Sigmoid colon (tissue), 7 donors: ENCODE measurements at regions of chr9 and their contacts with region 1.

Region 1: DNA sequence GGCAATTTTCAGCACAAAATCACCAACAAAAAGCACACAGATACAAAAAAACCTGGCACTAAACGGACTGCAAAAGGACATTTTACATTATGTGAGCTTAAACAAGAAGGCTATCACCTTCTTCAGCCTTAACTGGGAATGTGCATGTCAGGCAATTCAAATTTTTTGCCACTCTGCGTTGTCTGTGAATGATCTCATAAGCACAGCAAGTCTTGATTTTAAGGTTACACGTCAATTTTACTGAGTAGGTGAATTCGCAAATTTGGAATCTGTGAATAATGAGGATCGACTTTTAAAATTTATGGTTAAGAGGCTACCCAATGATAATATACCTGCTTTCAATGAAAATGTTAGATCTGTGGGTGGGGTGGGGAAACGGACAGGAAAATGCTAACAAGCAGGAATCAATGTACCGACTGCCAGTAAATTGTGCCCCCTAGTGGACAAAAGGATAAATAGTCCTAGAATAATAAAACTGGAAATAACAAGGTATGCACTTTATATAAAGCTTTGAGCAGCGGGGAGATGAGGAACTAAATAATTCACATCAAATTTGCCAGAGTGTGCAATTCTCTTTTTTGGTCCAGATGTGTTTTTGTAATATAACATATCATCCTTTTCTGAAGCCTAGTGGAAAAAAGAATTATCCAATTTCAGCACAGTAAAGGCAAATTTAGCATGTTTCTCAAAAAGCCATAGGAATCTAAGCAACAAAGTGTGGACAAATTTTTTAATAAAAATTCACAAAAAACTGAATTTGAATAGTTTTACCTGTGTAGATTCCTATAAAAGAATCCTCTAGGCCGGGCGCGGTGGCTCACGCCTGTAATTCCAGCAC is 20.5 kb downstream of the EQTN start:
- DNase-seq: no peak
- H3K4me3 ChIP-seq: peak overlapping the region in 2 of 4 donors; percentile 13 to 22
- H3K27ac ChIP-seq: no peak overlapping the region
- H3K4me1 ChIP-seq: peaks cover 0 to 11% (median 8%) of the 10 kb centered on the region in 4 donors
- H3K27me3 ChIP-seq: no peaks in the 10 kb centered on the region
- CTCF ChIP-seq: peak; percentile 52 to 80 (median 71)
- EP300 ChIP-seq: no peak
- POLR2A ChIP-seq: no peak

Region 2: GRCh38 chr9:27033823-27034403 is 242.5 kb before region 1 on chr9:
- intact Hi-C with region 1: loop called (anchors 1 kb)
- DNase-seq: peak; percentile 67
- H3K4me3 ChIP-seq: no peak overlapping the region
- H3K27ac ChIP-seq: no peak overlapping the region
- H3K4me1 ChIP-seq: no peaks in the 10 kb centered on the region
- H3K27me3 ChIP-seq: no peaks in the 10 kb centered on the region
- CTCF ChIP-seq: peak; percentile 49 to 80 (median 71)
- EP300 ChIP-seq: no peak
- POLR2A ChIP-seq: no peak

Region 3: DNA sequence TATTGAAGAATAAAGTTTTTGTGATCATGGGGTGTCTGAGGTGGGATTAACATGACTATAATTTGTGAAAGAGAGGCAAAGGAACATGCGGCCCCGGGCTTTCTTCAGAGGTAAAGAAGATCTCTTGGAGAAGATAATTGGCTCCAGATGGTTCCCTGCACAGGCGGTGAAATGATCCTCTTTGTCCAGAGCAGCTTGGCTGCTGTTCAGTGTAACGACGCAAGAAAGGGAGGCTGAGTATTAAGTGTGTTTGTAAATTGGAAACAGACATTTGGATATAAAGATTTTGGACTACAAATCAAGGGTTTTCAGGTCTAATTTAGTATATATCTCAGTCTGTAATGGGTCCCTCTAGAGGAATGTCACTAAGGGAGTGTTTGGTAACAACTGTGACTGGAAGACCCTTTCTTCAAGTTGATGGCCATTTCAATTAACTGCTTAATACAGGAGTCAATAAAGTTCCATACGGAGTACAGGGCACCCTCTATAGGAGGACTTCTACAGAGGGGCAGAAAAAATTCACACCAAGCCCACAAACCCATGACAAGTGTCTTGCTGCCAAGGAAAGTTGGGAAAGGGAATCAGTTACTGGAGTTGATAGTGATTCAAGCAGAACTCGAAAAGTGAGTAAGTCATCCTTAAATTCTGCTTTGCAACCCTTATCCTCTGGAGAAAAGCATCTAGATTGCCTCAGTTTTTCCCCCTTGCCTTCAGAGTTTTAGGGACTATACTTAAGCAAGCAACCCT is 16.4 kb after region 1 on chr9:
- intact Hi-C with region 1: no loop called
- DNase-seq: peak; percentile 66
- H3K4me3 ChIP-seq: no peak overlapping the region
- H3K27ac ChIP-seq: no peak overlapping the region
- H3K4me1 ChIP-seq: no peaks in the 10 kb centered on the region
- H3K27me3 ChIP-seq: no peaks in the 10 kb centered on the region
- CTCF ChIP-seq: no peak
- EP300 ChIP-seq: no peak
- POLR2A ChIP-seq: no peak